Breast epithelium (tissue), 4 donors: ENCODE measurements at regions of chr1 and their contacts with region 1.

Region 1: GRCh38 chr1:97654876-97655585 is 265.8 kb downstream of the DPYD start:
- DNase-seq: no peak
- H3K4me3 ChIP-seq: no peak overlapping the region
- H3K27ac ChIP-seq: no peak overlapping the region
- H3K4me1 ChIP-seq: no peaks in the 10 kb centered on the region
- H3K27me3 ChIP-seq: no peaks in the 10 kb centered on the region
- CTCF ChIP-seq: no peak
- POLR2A ChIP-seq: no peak

Region 2: GRCh38 chr1:97412166-97412565 is 242.9 kb before region 1 on chr1:
- intact Hi-C with region 1: no loop called
- DNase-seq: no peak
- H3K4me3 ChIP-seq: no peak overlapping the region
- H3K27ac ChIP-seq: no peak overlapping the region
- H3K4me1 ChIP-seq: no peaks in the 10 kb centered on the region
- H3K27me3 ChIP-seq: no peaks in the 10 kb centered on the region
- CTCF ChIP-seq: no peak
- POLR2A ChIP-seq: no peak

Region 3: GRCh38 chr1:97581614-97582051 is 73.4 kb before region 1 on chr1:
- intact Hi-C with region 1: no loop called
- DNase-seq: no peak
- H3K4me3 ChIP-seq: no peak overlapping the region
- H3K27ac ChIP-seq: no peak overlapping the region
- H3K4me1 ChIP-seq: no peaks in the 10 kb centered on the region
- H3K27me3 ChIP-seq: no peaks in the 10 kb centered on the region
- CTCF ChIP-seq: no peak
- POLR2A ChIP-seq: no peak

Region 4: DNA sequence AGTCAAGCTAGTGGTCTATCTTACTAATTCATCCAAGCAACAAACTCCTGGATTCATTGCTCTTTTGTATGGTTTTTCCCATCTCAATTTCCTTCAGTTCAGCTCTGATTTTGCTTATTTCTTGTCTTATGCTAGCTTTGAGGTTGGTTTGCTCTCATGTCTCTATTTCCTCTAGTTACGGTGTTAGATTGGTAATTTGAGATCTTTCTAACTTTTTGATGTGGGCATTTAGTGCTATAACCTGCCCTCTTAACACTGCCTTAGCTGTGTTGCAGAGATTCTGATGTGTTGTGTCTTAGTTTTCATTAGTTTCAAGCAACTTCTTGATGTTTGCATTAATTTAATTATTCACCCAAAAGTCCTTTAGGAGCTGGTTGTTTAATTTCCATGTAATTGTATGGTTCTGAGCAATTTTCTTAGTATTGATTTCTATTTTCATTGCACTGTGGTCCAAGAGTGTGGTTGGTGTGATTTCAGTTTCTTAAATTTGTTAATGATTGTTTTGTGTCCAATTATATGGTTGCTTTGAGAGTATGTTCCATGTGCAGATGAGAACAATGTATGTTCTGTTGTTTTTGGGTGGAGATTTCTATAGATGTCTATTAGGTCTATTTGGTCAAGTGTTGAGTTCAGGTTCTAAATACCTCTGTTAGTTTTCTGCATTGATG is 1195.1 kb after region 1 on chr1:
- intact Hi-C with region 1: loop called (anchors 10 kb)
- DNase-seq: no peak
- H3K4me3 ChIP-seq: no peak overlapping the region
- H3K27ac ChIP-seq: no peak overlapping the region
- H3K4me1 ChIP-seq: no peaks in the 10 kb centered on the region
- H3K27me3 ChIP-seq: no peaks in the 10 kb centered on the region
- CTCF ChIP-seq: no peak
- POLR2A ChIP-seq: no peak